ENCODE measurements at regions of chr5 and their contacts with region 1.

Region 1: GRCh38 chr5:168291464-168291961 is at the start of gene WWC1:
- DNase-seq: peak; percentile 72
- H3K4me3 Mint-ChIP-seq: peak within 1 kb of the TSS; percentile 64
- H3K27ac Mint-ChIP-seq: no peak within 1 kb of the TSS
- H3K4me1 Mint-ChIP-seq: peaks cover 29% of the 10 kb centered on the region
- H3K27me3 Mint-ChIP-seq: peaks cover 11% of the 10 kb centered on the region
- total RNA-seq, gene WWC1: 0.82 to 1.3 TPM

Region 2: GRCh38 chr5:168219515-168220410 is 71.8 kb before region 1 on chr5:
- CTCF ChIA-PET with region 1: no interaction called
- POLR2A ChIA-PET with region 1: no interaction called
- intact Hi-C with region 1: no loop called
- DNase-seq: peak; percentile 33
- H3K4me3 Mint-ChIP-seq: no peak overlapping the region
- H3K27ac Mint-ChIP-seq: no peak overlapping the region
- H3K4me1 Mint-ChIP-seq: peaks cover 2% of the 10 kb centered on the region
- H3K27me3 Mint-ChIP-seq: peaks cover 6% of the 10 kb centered on the region

Region 3: DNA sequence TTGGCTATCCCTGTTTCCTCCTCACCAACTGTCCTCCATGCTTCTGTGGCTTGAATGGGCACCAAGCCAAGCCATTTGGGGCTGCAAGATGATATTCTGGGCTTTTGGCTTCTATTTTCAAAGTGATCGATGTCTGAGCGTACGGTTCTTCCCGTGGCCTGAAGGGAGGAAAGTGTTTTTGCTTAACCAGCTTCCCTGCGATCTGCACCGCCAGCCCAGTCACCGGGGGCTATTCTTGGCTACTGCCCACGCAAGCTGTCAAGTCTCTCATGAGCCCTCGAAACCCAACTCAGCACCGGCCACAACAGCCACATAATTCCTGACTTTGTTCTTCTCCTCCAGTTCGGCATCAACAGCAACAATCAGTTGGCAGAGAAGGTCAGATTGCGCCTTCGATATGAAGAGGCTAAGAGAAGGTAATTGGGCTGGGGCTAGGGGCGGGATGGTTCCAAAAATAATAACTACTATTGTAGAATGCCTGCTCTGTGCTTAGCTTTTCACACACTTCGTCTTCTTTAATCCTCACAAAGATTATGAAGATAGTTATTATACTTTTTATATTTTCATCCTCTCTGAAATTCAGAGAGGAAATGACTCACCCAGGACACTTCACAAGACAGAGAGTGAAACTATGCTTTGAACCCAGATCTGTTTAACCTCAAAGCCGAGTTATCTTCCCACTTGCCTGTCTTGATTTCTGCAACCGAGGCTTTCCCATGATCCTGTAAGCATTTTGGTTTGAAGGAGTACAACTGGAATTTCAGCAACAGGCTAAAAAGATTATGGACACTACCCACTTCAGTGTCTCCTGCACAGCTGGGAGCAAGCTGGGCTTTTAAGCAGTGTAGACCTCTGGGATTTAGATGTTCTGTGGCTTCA is 118.3 kb after region 1 on chr5:
- CTCF ChIA-PET with region 1: interaction called, 6 read pairs
- POLR2A ChIA-PET with region 1: no interaction called
- intact Hi-C with region 1: loop called (anchors 5 kb)
- DNase-seq: peak; percentile 61
- H3K4me3 Mint-ChIP-seq: peak overlapping the region; percentile 13
- H3K27ac Mint-ChIP-seq: no peak overlapping the region
- H3K4me1 Mint-ChIP-seq: peaks cover 23% of the 10 kb centered on the region
- H3K27me3 Mint-ChIP-seq: peaks cover 6% of the 10 kb centered on the region

Region 4: DNA sequence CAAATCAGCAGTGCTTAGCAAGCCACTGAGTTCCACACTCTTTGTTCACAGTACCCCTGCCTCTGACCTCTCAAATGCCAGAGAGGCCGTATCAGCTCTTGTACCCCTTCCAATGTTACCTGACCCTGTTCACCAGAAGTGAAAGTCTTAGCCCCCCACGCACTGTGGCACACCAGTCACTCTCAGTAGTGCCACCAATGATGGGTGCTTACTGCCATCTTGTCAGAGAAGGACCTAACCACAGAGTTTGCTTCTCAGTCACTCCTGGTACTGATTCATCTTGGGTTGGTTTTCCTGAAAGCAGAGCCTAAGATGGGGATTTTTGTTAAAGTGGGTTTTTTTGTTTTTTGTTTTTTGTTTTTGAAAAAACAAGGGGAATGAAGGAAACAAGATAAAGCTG is 316.4 kb after region 1 on chr5:
- CTCF ChIA-PET with region 1: no interaction called
- POLR2A ChIA-PET with region 1: no interaction called
- intact Hi-C with region 1: loop called (anchors 5 kb)
- DNase-seq: peak; percentile 76
- H3K4me3 Mint-ChIP-seq: no peak overlapping the region
- H3K27ac Mint-ChIP-seq: peak overlapping the region; percentile 24
- H3K4me1 Mint-ChIP-seq: peaks cover 20% of the 10 kb centered on the region
- H3K27me3 Mint-ChIP-seq: peaks cover 3% of the 10 kb centered on the region

Measured in activated CD4-positive, alpha-beta memory T cell treated with anti-CD3 and anti-CD28 coated beads for 36 hours (primary cell).